Heart right ventricle (tissue), 16 donors: ENCODE measurements at regions of chr3 and their contacts with region 1.

Region 1: DNA sequence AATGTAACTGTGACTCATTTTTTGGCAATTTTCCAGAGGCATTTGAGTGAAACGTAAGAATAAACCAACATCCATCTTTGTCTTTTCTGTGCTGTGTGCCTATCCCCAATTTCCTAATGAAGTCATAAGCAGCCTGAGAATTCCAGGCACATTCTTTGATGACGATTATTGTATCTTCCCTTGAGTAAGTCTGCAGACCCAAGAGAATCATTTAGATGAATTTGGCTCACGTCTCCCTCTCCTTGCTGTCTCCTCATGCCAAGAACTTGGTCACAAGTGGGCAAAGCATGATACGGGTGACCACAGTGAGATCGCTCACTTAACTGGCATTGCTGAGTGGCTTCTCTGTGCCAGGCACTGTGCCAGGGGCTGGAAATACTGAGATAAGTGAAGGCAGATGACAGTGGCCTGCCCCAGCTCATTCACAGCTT is 384.5 kb upstream of the IL12A start:
- DNase-seq: peak; percentile 77 to 86
- ATAC-seq: peak; percentile 90 to 99 (median 98)
- H3K4me3 ChIP-seq: no peak overlapping the region
- H3K27ac ChIP-seq: peak overlapping the region in 7 of 10 donors; percentile 55 to 62 (median 58)
- H3K4me1 ChIP-seq: peaks cover 0 to 12% (median 0%) of the 10 kb centered on the region in 9 donors
- H3K27me3 ChIP-seq: no peaks in the 10 kb centered on the region
- CTCF ChIP-seq: no peak

Region 2: GRCh38 chr3:159236321-159236720 is 367.8 kb before region 1 on chr3:
- intact Hi-C with region 1: no loop called
- DNase-seq: no peak
- ATAC-seq: no peak
- H3K4me3 ChIP-seq: no peak overlapping the region
- H3K27ac ChIP-seq: no peak overlapping the region
- H3K4me1 ChIP-seq: no peaks in the 10 kb centered on the region
- H3K27me3 ChIP-seq: peaks cover 0 to 6% (median 0%) of the 10 kb centered on the region in 7 donors
- CTCF ChIP-seq: no peak

Region 3: DNA sequence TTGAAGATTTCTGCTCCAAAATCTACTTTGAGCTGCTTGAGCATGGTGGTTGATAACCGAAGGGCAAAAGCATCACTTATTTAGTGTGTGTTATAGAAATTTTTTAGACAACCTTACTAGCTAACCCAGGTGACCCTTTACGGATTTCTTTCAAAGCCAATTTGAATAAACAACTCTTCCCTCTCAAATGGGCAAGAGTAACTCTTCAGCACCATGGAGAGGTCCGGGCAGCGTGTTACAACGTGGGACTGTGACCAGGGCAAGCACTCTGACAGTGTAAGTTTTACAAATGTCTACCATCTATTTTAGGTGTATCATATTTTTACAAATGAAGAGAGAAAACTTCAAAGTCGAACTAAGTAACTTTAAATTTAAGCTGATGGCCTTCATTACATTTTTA is 330.6 kb before region 1 on chr3:
- intact Hi-C with region 1: loop called in 2 of 10 experiments (anchors 10 kb)
- DNase-seq: peak; percentile 18 to 60
- ATAC-seq: peak in 2 of 8 donors; percentile 27 to 72
- H3K4me3 ChIP-seq: no peak overlapping the region
- H3K27ac ChIP-seq: no peak overlapping the region
- H3K4me1 ChIP-seq: no peaks in the 10 kb centered on the region
- H3K27me3 ChIP-seq: no peaks in the 10 kb centered on the region
- CTCF ChIP-seq: no peak